H1 (cell line): ENCODE measurements at regions of chr11 and their contacts with region 1.

Region 1: DNA sequence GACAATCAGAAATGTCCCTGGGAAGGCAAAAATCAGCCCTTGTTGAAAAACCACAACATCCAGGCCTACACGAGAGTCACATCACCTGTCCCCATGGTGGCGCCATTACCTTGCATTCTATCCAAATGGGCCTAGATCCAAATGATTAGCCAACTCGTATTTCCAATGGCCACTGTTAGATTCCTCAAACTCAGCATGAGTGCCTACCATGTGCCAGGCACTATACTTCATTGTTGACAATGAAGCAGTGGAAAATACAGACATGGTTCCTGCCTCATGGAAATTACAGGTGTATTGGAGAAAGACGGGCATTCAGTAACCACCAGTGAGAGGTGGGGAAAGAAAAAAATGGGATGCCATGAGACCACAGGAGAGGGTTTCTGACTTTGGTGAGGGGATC is 29.8 kb upstream of the CREB3L1 start:
- DNase-seq: peak in 1 of 2 experiments; percentile 72
- H3K4me3 ChIP-seq: no peak overlapping the region
- H3K27ac ChIP-seq: no peak overlapping the region
- H3K4me1 ChIP-seq: peaks cover 1 to 8% (median 3%) of the 10 kb centered on the region in 4 experiments; a peak in 6 of 7 replicates
- H3K27me3 ChIP-seq: no peaks in the 10 kb centered on the region
- CTCF ChIP-seq: peak; percentile 77 to 92 (median 88)
- EP300 ChIP-seq: no peak
- POLR2A ChIP-seq: no peak
- RAD21 ChIP-seq: peak; percentile 97 to 98

Region 2: DNA sequence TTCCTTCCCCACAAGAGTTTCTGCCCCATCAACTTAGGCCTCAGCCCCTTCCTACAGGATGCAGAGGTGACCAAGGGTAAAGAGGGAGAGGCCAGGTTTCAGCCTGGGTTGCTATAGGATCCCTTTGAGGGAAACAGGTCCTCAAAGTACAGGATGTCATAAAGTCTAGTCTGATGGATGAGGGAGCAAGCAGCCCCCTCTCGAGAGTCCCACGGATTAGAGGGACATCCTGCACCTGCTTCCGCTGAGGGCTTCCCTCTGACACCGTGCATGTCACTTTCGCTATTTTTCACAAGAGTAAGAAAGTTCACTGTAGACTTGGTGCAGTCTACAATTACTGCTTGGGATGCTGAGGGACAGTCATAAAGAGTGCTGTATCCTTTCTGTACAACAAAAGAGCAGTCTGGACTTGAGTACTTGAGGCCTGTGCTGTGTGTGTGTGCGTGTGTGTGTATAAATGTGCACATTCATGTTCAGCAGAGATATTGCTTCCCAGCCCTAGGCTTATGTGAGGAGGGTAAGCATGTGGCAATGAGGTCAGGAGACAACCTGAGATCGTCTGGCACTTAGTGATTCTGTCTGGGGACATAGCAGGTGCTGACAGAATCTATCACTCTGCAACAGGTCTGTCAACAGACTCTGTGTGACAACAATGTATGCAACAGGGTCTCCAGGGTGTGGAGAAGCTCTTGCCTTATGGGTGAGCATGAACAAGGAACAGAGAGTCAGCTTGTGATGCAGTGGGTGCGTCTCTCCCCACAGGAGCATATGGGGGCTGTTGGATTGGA is 564.2 kb before region 1 on chr11:
- CTCF ChIA-PET with region 1: no interaction called
- POLR2A ChIA-PET with region 1: no interaction called
- DNase-seq: no peak
- H3K4me3 ChIP-seq: no peak overlapping the region
- H3K27ac ChIP-seq: no peak overlapping the region
- H3K4me1 ChIP-seq: peaks cover 0 to 6% (median 5%) of the 10 kb centered on the region in 4 experiments; a peak in 3 of 7 replicates
- H3K27me3 ChIP-seq: peaks cover 0 to 6% (median 2%) of the 10 kb centered on the region in 4 experiments; a peak in 2 of 7 replicates
- CTCF ChIP-seq: no peak
- EP300 ChIP-seq: no peak
- POLR2A ChIP-seq: no peak
- RAD21 ChIP-seq: no peak

Region 3: GRCh38 chr11:46272816-46273427 is 25.3 kb after region 1 on chr11:
- CTCF ChIA-PET with region 1: interaction called, 56 read pairs
- POLR2A ChIA-PET with region 1: interaction called, 28 read pairs
- DNase-seq: no peak
- H3K4me3 ChIP-seq: no peak overlapping the region
- H3K27ac ChIP-seq: no peak overlapping the region
- H3K4me1 ChIP-seq: peaks cover 2 to 14% (median 6%) of the 10 kb centered on the region in 4 experiments; a peak in 4 of 7 replicates
- H3K27me3 ChIP-seq: peaks cover 0 to 4% (median 4%) of the 10 kb centered on the region in 4 experiments; a peak in 2 of 7 replicates
- CTCF ChIP-seq: no peak
- EP300 ChIP-seq: no peak
- POLR2A ChIP-seq: no peak
- RAD21 ChIP-seq: no peak

Region 4: DNA sequence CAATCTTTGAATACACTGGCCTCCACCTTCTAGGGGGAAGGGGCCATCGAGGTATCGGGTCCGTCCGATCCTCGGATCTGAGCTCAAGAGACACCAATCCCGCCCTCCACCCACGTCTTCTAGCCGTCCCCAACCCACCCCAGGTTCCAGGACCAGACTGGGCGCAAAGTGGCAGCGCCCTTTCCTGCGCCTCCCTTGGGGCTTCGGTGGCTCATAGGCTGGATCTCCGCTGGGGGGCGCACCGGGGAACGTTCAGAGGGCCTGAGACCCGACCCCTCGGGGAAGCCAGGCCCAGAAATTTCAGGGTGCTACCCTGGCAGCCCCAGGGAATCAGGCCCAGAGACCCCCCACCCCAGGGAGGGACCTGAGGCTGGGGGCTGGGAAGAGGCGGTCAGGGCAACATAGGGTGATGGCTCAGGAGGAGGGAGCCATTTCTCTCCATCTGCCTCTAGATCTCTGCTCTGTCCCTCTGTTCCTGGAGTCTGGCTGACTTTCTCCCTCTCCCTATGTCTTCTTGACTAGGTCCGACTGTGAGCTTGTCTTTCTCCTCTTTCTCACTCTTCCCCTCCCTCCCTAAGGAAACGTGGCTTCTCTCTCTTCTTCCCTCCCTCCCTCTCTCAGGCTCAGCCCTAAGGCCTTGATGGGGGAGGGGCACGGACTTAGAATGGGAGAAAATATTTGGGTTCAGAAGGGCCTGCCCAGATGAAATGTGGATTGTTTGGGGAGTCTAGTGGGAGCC is 30.9 kb after region 1 on chr11:
- CTCF ChIA-PET with region 1: interaction called, 56 read pairs
- POLR2A ChIA-PET with region 1: interaction called, 28 read pairs
- DNase-seq: peak in 1 of 2 experiments; percentile 92
- H3K4me3 ChIP-seq: peak overlapping the region; percentile 54 to 81 (median 64)
- H3K27ac ChIP-seq: no peak overlapping the region
- H3K4me1 ChIP-seq: peaks cover 18 to 35% (median 24%) of the 10 kb centered on the region in 4 experiments; a peak in 6 of 7 replicates
- H3K27me3 ChIP-seq: no peaks in the 10 kb centered on the region
- CTCF ChIP-seq: peak; percentile 68 to 86 (median 72)
- EP300 ChIP-seq: no peak
- POLR2A ChIP-seq: no peak
- RAD21 ChIP-seq: peak; percentile 43 to 69

Region 5: GRCh38 chr11:46675288-46675851 is 427.7 kb after region 1 on chr11:
- CTCF ChIA-PET with region 1: no interaction called
- POLR2A ChIA-PET with region 1: no interaction called
- DNase-seq: no peak
- H3K4me3 ChIP-seq: no peak overlapping the region
- H3K27ac ChIP-seq: peak overlapping the region; percentile 9; the same call in 1 of the 2 replicates
- H3K4me1 ChIP-seq: peaks cover 3 to 19% (median 7%) of the 10 kb centered on the region in 4 experiments
- H3K27me3 ChIP-seq: no peaks in the 10 kb centered on the region
- CTCF ChIP-seq: no peak
- EP300 ChIP-seq: no peak
- POLR2A ChIP-seq: no peak
- RAD21 ChIP-seq: no peak